ENCODE measurements at regions of chr11 and their contacts with region 1.

Region 1: GRCh38 chr11:81658722-81659121 is 1074.9 kb downstream of the FAM181B start:
- DNase-seq: peak in 2 of 9 donors; percentile 1 to 6
- ATAC-seq: no peak
- H3K4me3 ChIP-seq: no peak overlapping the region
- H3K4me3 Mint-ChIP-seq: no peak overlapping the region
- H3K27ac ChIP-seq: no peak overlapping the region
- H3K27ac Mint-ChIP-seq: no peak overlapping the region
- H3K4me1 ChIP-seq: no peaks in the 10 kb centered on the region
- H3K4me1 Mint-ChIP-seq: no peaks in the 10 kb centered on the region
- H3K27me3 ChIP-seq: no peaks in the 10 kb centered on the region
- H3K27me3 Mint-ChIP-seq: peaks cover 2 to 43% (median 37%) of the 10 kb centered on the region in 5 donors

Region 2: DNA sequence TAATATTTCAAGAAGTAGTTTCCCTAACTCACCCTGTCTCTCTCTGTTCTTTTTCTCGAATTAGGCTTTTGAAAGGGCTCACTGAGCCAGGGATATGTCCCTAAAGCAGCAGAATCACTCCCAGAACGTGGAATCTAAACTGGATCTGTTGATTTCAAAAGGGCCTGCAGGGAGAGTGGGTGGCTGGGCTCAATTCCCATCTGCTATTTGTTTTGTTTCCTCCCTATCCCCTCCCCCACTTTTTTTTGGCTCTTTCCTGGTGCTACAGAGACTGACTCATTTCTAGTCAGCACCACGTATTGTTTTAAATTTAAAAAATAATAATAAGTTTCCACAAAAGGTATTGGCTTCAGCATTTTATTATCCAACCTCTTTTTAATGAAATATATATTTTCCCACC is 113.4 kb after region 1 on chr11:
- CTCF ChIA-PET with region 1: no interaction called
- POLR2A ChIA-PET with region 1: no interaction called
- intact Hi-C with region 1: no loop called
- DNase-seq: no peak
- ATAC-seq: no peak
- H3K4me3 ChIP-seq: no peak overlapping the region
- H3K4me3 Mint-ChIP-seq: no peak overlapping the region
- H3K27ac ChIP-seq: no peak overlapping the region
- H3K27ac Mint-ChIP-seq: no peak overlapping the region
- H3K4me1 ChIP-seq: no peaks in the 10 kb centered on the region
- H3K4me1 Mint-ChIP-seq: no peaks in the 10 kb centered on the region
- H3K27me3 ChIP-seq: no peaks in the 10 kb centered on the region
- H3K27me3 Mint-ChIP-seq: peaks cover 0 to 5% (median 0%) of the 10 kb centered on the region in 5 donors

Region 3: DNA sequence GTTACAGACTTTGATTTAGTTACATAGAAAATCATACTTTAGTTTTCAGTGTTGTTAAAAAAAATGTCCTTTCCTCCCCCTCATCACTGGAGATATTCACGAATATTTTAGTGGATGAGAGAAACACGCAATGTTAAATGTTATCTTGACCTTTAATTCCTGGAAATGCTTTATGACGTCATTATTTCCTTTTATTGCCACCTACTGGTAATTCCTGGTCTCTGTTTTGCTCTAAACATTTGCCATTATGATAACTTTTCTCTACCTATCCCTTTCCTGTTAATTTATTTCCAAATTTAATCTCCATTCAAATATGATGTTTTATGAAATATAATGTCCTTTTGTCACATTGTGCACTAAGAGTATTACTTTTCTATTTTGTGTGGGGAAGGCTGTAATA is 304.3 kb after region 1 on chr11:
- CTCF ChIA-PET with region 1: no interaction called
- POLR2A ChIA-PET with region 1: no interaction called
- intact Hi-C with region 1: loop called in 1 of 2 experiments (anchors 5 kb)
- DNase-seq: peak in 3 of 9 donors; percentile 4 to 10 (median 5)
- ATAC-seq: no peak
- H3K4me3 ChIP-seq: no peak overlapping the region
- H3K4me3 Mint-ChIP-seq: peak overlapping the region in 6 of 10 donors; percentile 37 to 62 (median 45)
- H3K27ac ChIP-seq: no peak overlapping the region
- H3K27ac Mint-ChIP-seq: no peak overlapping the region
- H3K4me1 ChIP-seq: peaks cover 0 to 8% of the 10 kb centered on the region in 2 donors
- H3K4me1 Mint-ChIP-seq: peaks cover 0 to 22% (median 16%) of the 10 kb centered on the region in 7 donors
- H3K27me3 ChIP-seq: no peaks in the 10 kb centered on the region
- H3K27me3 Mint-ChIP-seq: peaks cover 0 to 3% (median 0%) of the 10 kb centered on the region in 5 donors

Region 4: GRCh38 chr11:82701847-82702520 is 1043.3 kb after region 1 on chr11:
- CTCF ChIA-PET with region 1: no interaction called
- POLR2A ChIA-PET with region 1: no interaction called
- intact Hi-C with region 1: loop called in 1 of 2 experiments (anchors 5 kb)
- DNase-seq: peak in 3 of 9 donors; percentile 4 to 8 (median 5)
- ATAC-seq: no peak
- H3K4me3 ChIP-seq: no peak overlapping the region
- H3K4me3 Mint-ChIP-seq: no peak overlapping the region
- H3K27ac ChIP-seq: no peak overlapping the region
- H3K27ac Mint-ChIP-seq: peak overlapping the region in 1 of 9 donors; percentile 4
- H3K4me1 ChIP-seq: no peaks in the 10 kb centered on the region
- H3K4me1 Mint-ChIP-seq: no peaks in the 10 kb centered on the region
- H3K27me3 ChIP-seq: no peaks in the 10 kb centered on the region
- H3K27me3 Mint-ChIP-seq: peaks cover 5 to 18% (median 11%) of the 10 kb centered on the region in 5 donors